Activated T-helper 2 cell treated with anti-CD3 and anti-CD28 coated beads, Interferon-gamma antibody, Interleukin-2, Interleukin-4, amounts not matched to agents 10 μg/mL and 5 μg/mL and 100 μg/mL, durations not matched to agents 14 hours and 24 hours and 36 hours (primary cell): ENCODE measurements at regions of chr12 and their contacts with region 1.

Region 1: GRCh38 chr12:32671930-32672780 is 6.9 kb upstream of the DNM1L start:
- DNase-seq: no peak
- H3K4me3 Mint-ChIP-seq: no peak overlapping the region
- H3K27ac Mint-ChIP-seq: no peak overlapping the region
- H3K4me1 Mint-ChIP-seq: peaks cover 2% of the 10 kb centered on the region
- H3K27me3 Mint-ChIP-seq: peaks cover 2% of the 10 kb centered on the region

Region 2: GRCh38 chr12:32365473-32366064 is 306.6 kb before region 1 on chr12:
- intact Hi-C with region 1: loop called (anchors 1 kb)
- DNase-seq: no peak
- H3K4me3 Mint-ChIP-seq: no peak overlapping the region
- H3K27ac Mint-ChIP-seq: no peak overlapping the region
- H3K4me1 Mint-ChIP-seq: no peaks in the 10 kb centered on the region
- H3K27me3 Mint-ChIP-seq: no peaks in the 10 kb centered on the region